Dorsolateral prefrontal cortex (tissue), 120 donors: ENCODE measurements at regions of chr13 and their contacts with region 1.

Region 1: GRCh38 chr13:97307882-97308624 is 85.9 kb downstream of the MBNL2 start:
- DNase-seq: peak; percentile 51 to 84 (median 69)
- H3K4me3 ChIP-seq: peak overlapping the region in 21 of 59 donors; percentile 0 to 30 (median 10)
- H3K27ac ChIP-seq: peak overlapping the region in 55 of 59 donors; percentile 33 to 89 (median 76)
- H3K27me3 ChIP-seq: no peaks in the 10 kb centered on the region
- CTCF ChIP-seq: peak in 2 of 56 donors; percentile 11 to 19

Region 2: GRCh38 chr13:97249093-97249795 is 58.8 kb before region 1 on chr13:
- intact Hi-C with region 1: loop called (anchors 2 to 10 kb)
- DNase-seq: no peak
- H3K4me3 ChIP-seq: peak overlapping the region in 12 of 59 donors; percentile 1 to 22 (median 8)
- H3K27ac ChIP-seq: peak overlapping the region in 56 of 59 donors; percentile 7 to 99 (median 94)
- H3K27me3 ChIP-seq: no peaks in the 10 kb centered on the region
- CTCF ChIP-seq: no peak

Region 3: DNA sequence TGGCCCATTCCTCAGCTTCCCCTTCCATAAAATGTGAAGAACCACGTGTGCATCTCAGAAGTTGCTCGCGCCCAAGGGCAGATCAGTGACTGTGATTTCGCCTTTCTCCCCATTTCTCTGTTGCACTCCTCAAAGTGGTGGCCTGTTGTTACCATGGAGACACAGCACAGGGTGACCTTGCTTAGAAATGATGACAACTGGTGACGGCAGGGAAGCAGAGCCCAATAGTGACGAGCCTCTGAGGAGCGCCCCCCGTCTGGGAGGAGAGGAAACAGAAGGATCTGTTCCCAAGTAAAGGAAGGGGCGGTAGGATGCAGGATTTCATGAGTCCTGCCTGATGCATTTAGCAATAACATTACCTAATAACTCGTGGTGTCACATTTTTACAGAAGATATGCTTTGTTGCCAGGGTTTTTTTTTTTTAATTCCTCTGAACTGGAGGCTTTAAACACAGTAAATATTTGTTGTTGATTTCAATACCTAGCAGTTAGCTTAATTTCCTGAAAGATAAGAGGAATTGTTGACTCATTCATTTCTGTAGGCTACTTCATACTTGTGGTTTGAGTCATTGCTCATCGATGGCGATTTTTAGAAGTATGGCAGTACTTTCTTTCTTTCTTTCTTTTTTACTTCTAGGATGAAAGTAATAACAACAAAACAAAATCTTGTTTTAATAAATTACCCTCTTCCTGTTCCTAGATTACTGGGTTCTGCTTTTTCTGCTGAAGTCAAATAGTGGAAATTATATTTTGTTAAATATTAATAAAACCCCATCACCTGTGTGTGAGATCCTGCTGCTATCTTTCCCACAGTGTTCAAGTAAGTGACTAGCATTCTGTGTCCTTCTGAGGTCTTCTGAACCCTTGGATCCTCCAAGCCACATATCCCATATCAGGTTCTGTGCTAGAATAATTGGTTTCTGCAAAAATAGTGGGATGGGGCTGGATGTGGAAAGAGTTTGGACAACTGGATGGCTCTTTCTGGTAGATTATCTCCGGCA is 50.0 kb before region 1 on chr13:
- intact Hi-C with region 1: loop called in 1 of 2 experiments (anchors 10 kb)
- DNase-seq: no peak
- H3K4me3 ChIP-seq: peak overlapping the region in 1 of 59 donors; percentile 19
- H3K27ac ChIP-seq: peak overlapping the region in 58 of 59 donors; percentile 18 to 97 (median 74)
- H3K27me3 ChIP-seq: no peaks in the 10 kb centered on the region
- CTCF ChIP-seq: peak in 1 of 56 donors; percentile 7

Region 4: GRCh38 chr13:97344265-97345175 is 36.5 kb after region 1 on chr13:
- intact Hi-C with region 1: loop called in 1 of 2 experiments (anchors 5 kb)
- DNase-seq: peak in 9 of 10 donors; percentile 60 to 85 (median 76)
- H3K4me3 ChIP-seq: peak overlapping the region in 5 of 59 donors; percentile 1 to 30 (median 11)
- H3K27ac ChIP-seq: peak overlapping the region in 57 of 59 donors; percentile 10 to 89 (median 72)
- H3K27me3 ChIP-seq: no peaks in the 10 kb centered on the region
- CTCF ChIP-seq: peak; percentile 39 to 86 (median 74)

Region 5: DNA sequence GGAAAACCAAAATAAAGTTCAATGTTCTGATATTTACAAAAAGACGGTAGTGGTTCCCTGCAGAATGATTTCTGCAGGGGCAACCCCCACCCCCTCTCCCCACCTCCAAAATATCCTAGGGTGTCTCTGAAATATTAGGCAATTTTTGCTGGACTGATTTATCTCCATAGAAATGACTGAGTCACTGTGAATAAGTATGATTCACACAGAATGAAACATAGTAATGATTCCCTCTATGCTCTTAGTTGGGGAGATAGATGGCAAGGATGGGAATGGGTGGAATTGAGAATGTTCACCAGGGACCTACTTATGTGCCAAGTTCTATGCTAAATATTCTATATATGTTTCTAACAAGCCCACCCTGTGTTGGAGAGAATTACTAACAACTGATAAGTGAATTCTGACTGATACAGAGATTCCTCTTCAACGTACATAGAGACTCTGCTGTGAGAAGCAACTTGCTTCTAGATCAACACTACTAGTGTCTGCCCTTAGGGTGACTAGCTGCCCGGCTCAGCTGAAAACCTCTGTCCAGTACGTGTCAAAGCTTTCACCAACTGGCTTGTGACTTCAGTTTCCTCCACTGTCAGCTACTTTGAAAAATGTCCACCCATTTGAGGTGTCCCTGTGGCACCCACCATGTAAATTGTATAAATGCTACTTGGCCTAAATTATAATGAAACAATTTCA is 87.5 kb after region 1 on chr13:
- intact Hi-C with region 1: no loop called
- DNase-seq: no peak
- H3K4me3 ChIP-seq: no peak overlapping the region
- H3K27ac ChIP-seq: peak overlapping the region in 26 of 59 donors; percentile 0 to 61 (median 18)
- H3K27me3 ChIP-seq: no peaks in the 10 kb centered on the region
- CTCF ChIP-seq: no peak